ENCODE measurements at regions of chr1 and their contacts with region 1.

Region 1: GRCh38 chr1:46027788-46028573 is 104.4 kb downstream of the PIK3R3 start:
- DNase-seq: no peak
- H3K4me3 ChIP-seq: no peak overlapping the region
- H3K27ac ChIP-seq: no peak overlapping the region
- H3K4me1 ChIP-seq: no peaks in the 10 kb centered on the region
- CTCF ChIP-seq: no peak

Region 2: GRCh38 chr1:45879885-45880598 is 147.9 kb before region 1 on chr1:
- CTCF ChIA-PET with region 1: no interaction called
- POLR2A ChIA-PET with region 1: interaction called, 11 read pairs
- intact Hi-C with region 1: no loop called
- DNase-seq: peak; percentile 9
- H3K4me3 ChIP-seq: no peak overlapping the region
- H3K27ac ChIP-seq: no peak overlapping the region
- H3K4me1 ChIP-seq: peaks cover 32% of the 10 kb centered on the region
- CTCF ChIP-seq: no peak